ENCODE measurements at regions of chr3 and their contacts with region 1.

Region 1: GRCh38 chr3:173037840-173038483 is 103.1 kb downstream of the SPATA16 start:
- DNase-seq: no peak
- ATAC-seq: peak in 3 of 4 donors; percentile 18 to 36 (median 34)
- H3K4me3 ChIP-seq: no peak overlapping the region
- H3K27ac ChIP-seq: peak overlapping the region in 10 of 12 donors; percentile 8 to 78 (median 47)
- H3K4me1 ChIP-seq: peaks cover 0 to 24% (median 0%) of the 10 kb centered on the region in 12 donors
- H3K27me3 ChIP-seq: no peaks in the 10 kb centered on the region
- CTCF ChIP-seq: no peak
- POLR2A ChIP-seq: no peak

Region 2: DNA sequence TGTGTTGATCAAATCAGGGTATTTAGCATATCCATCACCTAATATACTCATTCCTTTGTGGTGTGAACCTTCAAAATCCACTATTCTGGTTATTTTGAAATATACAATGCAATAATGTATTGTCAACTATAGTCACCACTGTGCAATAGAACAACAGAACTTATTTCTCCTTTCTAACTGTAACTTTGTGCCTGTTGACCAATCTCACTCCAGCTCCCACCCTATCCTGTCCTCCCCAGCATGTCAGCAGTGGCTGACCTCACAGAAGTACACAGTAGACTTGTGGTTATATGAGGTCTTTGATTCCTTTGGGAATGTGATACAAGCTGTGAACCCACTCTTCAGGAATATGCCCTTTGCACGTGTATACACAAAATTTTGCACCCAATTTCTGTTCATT is 223.2 kb before region 1 on chr3:
- intact Hi-C with region 1: loop called in 1 of 10 experiments (anchors 5 kb)
- DNase-seq: no peak
- ATAC-seq: no peak
- H3K4me3 ChIP-seq: no peak overlapping the region
- H3K27ac ChIP-seq: peak overlapping the region in 5 of 12 donors; percentile 55 to 73 (median 69)
- H3K4me1 ChIP-seq: peaks cover 0 to 13% (median 0%) of the 10 kb centered on the region in 12 donors
- H3K27me3 ChIP-seq: no peaks in the 10 kb centered on the region
- CTCF ChIP-seq: no peak
- POLR2A ChIP-seq: no peak

Region 3: GRCh38 chr3:172836390-172836997 is 201.5 kb before region 1 on chr3:
- intact Hi-C with region 1: loop called in 7 of 10 experiments (anchors 5 to 10 kb)
- DNase-seq: peak in 2 of 5 donors; percentile 20 to 39
- ATAC-seq: peak in 2 of 4 donors; percentile 52 to 58
- H3K4me3 ChIP-seq: no peak overlapping the region
- H3K27ac ChIP-seq: no peak overlapping the region
- H3K4me1 ChIP-seq: peaks cover 0 to 4% (median 0%) of the 10 kb centered on the region in 12 donors
- H3K27me3 ChIP-seq: no peaks in the 10 kb centered on the region
- CTCF ChIP-seq: peak; percentile 45 to 73 (median 58)
- POLR2A ChIP-seq: no peak

Region 4: GRCh38 chr3:172982736-172983364 is 55.1 kb before region 1 on chr3:
- intact Hi-C with region 1: loop called in 2 of 10 experiments (anchors 5 kb)
- DNase-seq: no peak
- ATAC-seq: peak; percentile 42 to 70 (median 60)
- H3K4me3 ChIP-seq: peak overlapping the region in 4 of 12 donors; percentile 11 to 28 (median 20)
- H3K27ac ChIP-seq: peak overlapping the region in 2 of 12 donors; percentile 13 to 65
- H3K4me1 ChIP-seq: peaks cover 0 to 9% (median 0%) of the 10 kb centered on the region in 12 donors
- H3K27me3 ChIP-seq: no peaks in the 10 kb centered on the region
- CTCF ChIP-seq: peak in 10 of 12 donors; percentile 14 to 47 (median 30)
- POLR2A ChIP-seq: no peak